A549 (cell line): ENCODE measurements at regions of chr14 and their contacts with region 1.

Region 1: GRCh38 chr14:103920981-103921854 is 7.0 kb upstream of the TDRD9 start:
- DNase-seq: peak; percentile 87 to 93
- ATAC-seq: peak; percentile 99 to 100
- H3K4me3 ChIP-seq: peak overlapping the region; percentile 63
- H3K27ac ChIP-seq: peak overlapping the region; percentile 81 to 93
- H3K4me1 ChIP-seq: peaks cover 10% of the 10 kb centered on the region
- CTCF ChIP-seq: peak; percentile 90
- EP300 ChIP-seq: no peak
- POLR2A ChIP-seq: peak; percentile 80
- RAD21 ChIP-seq: peak; percentile 3 to 37; a peak in 2 of 5 replicates

Region 2: GRCh38 chr14:103886304-103887169 is 34.7 kb before region 1 on chr14:
- CTCF ChIA-PET with region 1: no interaction called
- POLR2A ChIA-PET with region 1: no interaction called
- DNase-seq: no peak
- ATAC-seq: peak in 1 of 2 experiments; percentile 18; a peak in 1 of 6 replicates
- H3K4me3 ChIP-seq: no peak overlapping the region
- H3K27ac ChIP-seq: no peak overlapping the region
- H3K4me1 ChIP-seq: peaks cover under 1% of the 10 kb centered on the region; the same call in 2 of the 3 replicates
- CTCF ChIP-seq: no peak
- EP300 ChIP-seq: no peak
- POLR2A ChIP-seq: no peak
- RAD21 ChIP-seq: no peak

Region 3: GRCh38 chr14:103931422-103931821 is 10.2 kb after region 1 on chr14:
- CTCF ChIA-PET with region 1: interaction called, 14 read pairs
- POLR2A ChIA-PET with region 1: no interaction called
- DNase-seq: no peak
- ATAC-seq: no peak
- H3K4me3 ChIP-seq: no peak overlapping the region
- H3K27ac ChIP-seq: no peak overlapping the region
- H3K4me1 ChIP-seq: no peaks in the 10 kb centered on the region
- CTCF ChIP-seq: no peak
- EP300 ChIP-seq: no peak
- POLR2A ChIP-seq: no peak
- RAD21 ChIP-seq: no peak